ENCODE measurements at regions of chr17 and their contacts with region 1.

Region 1: DNA sequence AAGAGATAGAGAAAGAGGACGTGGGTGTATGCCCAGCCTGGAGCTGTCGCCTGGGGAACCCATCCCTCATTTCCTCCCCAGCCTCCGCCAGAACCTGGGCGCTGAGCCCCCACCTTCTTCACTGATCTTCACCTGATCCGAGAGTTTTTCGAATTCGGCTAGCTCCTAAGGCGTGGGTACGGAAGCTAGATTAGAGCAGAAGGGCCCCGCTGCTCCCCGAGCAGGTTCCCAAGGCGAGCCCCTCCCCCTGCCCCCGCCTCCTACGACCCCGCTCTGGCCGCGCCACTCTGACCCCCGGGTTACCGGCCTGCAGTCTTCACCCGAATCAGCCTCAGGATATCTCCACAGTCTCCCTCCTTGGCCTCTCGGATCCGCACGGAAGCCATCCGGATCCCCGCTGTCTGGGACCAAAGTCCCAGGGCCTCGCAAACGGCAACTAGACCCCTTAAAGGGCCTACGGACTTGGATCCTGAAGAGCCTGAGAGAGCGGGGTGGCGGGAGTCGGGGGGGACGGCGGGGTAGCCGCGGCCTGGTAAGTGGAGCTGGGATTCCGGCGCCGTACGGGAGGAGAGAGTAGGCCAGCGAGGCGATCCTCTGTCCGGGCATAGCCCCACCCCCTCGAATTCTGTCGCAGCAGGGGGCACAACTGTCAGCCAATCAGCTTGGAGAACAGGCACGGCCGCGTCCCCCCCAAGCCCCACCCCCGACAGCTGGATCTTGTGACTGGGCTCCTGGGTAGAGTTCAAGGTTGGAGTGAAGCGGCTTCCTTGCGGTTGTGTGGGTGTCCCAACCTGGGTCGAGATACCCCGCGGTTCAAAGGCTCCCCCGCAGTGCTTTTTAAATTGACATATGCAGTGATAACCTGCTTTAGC is at the start of gene SAT2:
- H3K4me3 Mint-ChIP-seq: peak within 1 kb of the TSS; percentile 92
- H3K27ac Mint-ChIP-seq: peak within 1 kb of the TSS; percentile 96
- H3K4me1 Mint-ChIP-seq: peaks cover 18% of the 10 kb centered on the region
- H3K27me3 Mint-ChIP-seq: no peaks in the 10 kb centered on the region

Region 2: GRCh38 chr17:7614422-7615264 is 12.8 kb before region 1 on chr17 and contains the start of gene FXR2:
- intact Hi-C with region 1: loop called (anchors 1 kb)
- H3K4me3 Mint-ChIP-seq: peak within 1 kb of the TSS; percentile 92
- H3K27ac Mint-ChIP-seq: peak within 1 kb of the TSS; percentile 80
- H3K4me1 Mint-ChIP-seq: peaks cover 47% of the 10 kb centered on the region
- H3K27me3 Mint-ChIP-seq: no peaks in the 10 kb centered on the region

Measured in dendritic cell treated with granulocyte-macrophage colony-stimulating factor and Interleukin-4, amounts not matched to agents 40 ng/mL and 50 ng/mL, for 4 days (primary cell).